ENCODE measurements at regions of chr22 and their contacts with region 1.

Region 1: DNA sequence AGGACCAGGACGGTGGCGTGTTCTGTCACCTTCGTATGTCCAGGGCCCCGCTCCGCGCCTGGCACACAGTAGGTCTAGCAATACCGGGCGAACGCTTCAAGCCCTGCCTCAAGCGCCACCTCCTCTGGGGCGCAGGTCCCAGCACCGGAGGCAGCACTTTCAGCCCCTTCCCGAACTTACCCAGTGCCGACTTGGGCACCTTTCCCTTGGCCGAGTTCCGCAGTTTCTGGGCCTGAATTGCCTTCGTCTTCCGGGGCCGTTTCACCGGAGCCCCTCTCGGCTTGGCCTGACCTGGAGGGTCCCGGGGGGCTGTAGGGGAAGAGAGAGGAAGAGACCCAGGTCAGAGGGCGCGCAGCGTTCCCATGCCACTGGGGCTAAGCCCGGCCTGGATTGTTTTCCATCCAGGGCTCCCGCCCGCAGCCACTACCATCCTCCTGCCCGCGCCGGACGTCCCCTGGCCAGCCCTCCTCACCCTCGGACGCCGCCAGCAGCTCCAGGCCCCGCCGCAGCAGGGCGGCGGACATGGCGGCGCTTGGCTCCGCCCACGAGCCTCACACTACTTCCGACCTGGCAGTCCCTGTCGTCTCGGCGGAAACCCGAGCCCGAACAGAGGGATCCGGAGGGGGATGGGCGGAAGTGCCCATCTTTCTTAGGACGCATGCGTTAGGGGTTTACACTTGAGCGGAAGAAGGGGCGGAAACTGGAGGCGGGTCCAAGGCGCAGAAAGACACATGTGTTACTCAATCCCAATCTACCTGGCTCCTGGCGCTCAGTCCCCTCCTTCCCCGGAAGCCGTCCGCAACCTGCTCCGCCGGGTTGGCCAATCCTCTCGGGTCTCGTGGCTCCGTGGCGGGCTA is at the start of gene RPS19BP1:
- DNase-seq: peak; percentile 100
- ATAC-seq: peak; percentile 88
- H3K4me3 Mint-ChIP-seq: peak within 1 kb of the TSS; percentile 98
- H3K27ac Mint-ChIP-seq: peak within 1 kb of the TSS; percentile 94
- H3K4me1 Mint-ChIP-seq: peaks cover 60% of the 10 kb centered on the region
- H3K27me3 Mint-ChIP-seq: no peaks in the 10 kb centered on the region
- total RNA-seq, gene RPS19BP1: 80.1 to 80.2 TPM

Region 2: DNA sequence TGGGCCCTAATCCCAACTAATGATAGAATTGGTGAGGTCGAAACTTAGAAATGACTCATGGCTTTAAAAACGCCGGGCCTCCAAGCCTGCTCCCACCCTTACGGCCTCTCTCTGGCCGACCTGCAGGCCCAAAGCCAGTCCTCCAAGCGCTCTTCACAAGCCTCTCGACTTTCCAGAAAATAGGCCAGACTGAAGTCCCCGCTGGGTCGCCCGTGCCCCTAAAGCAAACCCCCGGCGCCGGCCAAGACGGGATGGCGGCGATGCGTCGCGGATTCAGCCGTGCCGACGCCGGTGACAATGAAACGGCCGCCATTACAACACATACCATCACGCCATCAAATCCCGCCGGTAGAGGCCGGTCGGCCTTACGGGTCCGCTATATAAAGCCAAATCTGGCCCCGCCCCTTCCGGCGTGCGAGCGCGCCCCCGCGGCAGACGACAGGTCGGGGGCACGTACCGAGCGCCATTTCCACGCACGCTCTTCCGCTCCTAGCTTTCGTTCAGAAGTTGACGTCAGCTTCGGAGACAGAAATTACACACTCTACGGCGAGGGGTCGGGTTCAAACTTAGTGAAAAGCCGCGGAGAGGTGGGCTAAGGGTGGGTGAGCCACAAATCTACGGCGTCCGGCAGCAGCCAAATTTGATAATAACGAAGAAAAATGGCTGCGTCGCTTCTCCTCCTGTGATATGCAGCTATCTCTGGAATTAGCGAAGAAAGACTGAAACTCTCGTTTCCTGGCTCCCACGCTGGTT is 213.0 kb before region 1 on chr22 and contains the start of gene RPL3:
- CTCF ChIA-PET with region 1: interaction called, 42 read pairs
- POLR2A ChIA-PET with region 1: interaction called, 56 read pairs
- DNase-seq: peak; percentile 97
- ATAC-seq: peak; percentile 83
- H3K4me3 Mint-ChIP-seq: peak within 1 kb of the TSS; percentile 100
- H3K27ac Mint-ChIP-seq: peak within 1 kb of the TSS; percentile 99
- H3K4me1 Mint-ChIP-seq: peaks cover 46% of the 10 kb centered on the region
- H3K27me3 Mint-ChIP-seq: no peaks in the 10 kb centered on the region
- total RNA-seq, gene RPL3: 1,693 to 1,717 TPM

Region 3: GRCh38 chr22:39490135-39490798 is 42.2 kb before region 1 on chr22:
- CTCF ChIA-PET with region 1: interaction called, 264 read pairs
- POLR2A ChIA-PET with region 1: interaction called, 9 read pairs
- DNase-seq: peak; percentile 89
- ATAC-seq: peak; percentile 99
- H3K4me3 Mint-ChIP-seq: peak overlapping the region; percentile 37
- H3K27ac Mint-ChIP-seq: peak overlapping the region; percentile 33
- H3K4me1 Mint-ChIP-seq: peaks cover 39% of the 10 kb centered on the region
- H3K27me3 Mint-ChIP-seq: no peaks in the 10 kb centered on the region

Region 4: GRCh38 chr22:39520054-39520891 is 12.2 kb before region 1 on chr22 and contains the start of gene ATF4:
- CTCF ChIA-PET with region 1: interaction called, 81 read pairs
- POLR2A ChIA-PET with region 1: interaction called, 75 read pairs
- DNase-seq: peak; percentile 98
- ATAC-seq: peak; percentile 89
- H3K4me3 Mint-ChIP-seq: peak within 1 kb of the TSS; percentile 90
- H3K27ac Mint-ChIP-seq: peak within 1 kb of the TSS; percentile 98
- H3K4me1 Mint-ChIP-seq: peaks cover 61% of the 10 kb centered on the region
- H3K27me3 Mint-ChIP-seq: no peaks in the 10 kb centered on the region
- total RNA-seq, gene ATF4: 412 to 426 TPM

Region 5: DNA sequence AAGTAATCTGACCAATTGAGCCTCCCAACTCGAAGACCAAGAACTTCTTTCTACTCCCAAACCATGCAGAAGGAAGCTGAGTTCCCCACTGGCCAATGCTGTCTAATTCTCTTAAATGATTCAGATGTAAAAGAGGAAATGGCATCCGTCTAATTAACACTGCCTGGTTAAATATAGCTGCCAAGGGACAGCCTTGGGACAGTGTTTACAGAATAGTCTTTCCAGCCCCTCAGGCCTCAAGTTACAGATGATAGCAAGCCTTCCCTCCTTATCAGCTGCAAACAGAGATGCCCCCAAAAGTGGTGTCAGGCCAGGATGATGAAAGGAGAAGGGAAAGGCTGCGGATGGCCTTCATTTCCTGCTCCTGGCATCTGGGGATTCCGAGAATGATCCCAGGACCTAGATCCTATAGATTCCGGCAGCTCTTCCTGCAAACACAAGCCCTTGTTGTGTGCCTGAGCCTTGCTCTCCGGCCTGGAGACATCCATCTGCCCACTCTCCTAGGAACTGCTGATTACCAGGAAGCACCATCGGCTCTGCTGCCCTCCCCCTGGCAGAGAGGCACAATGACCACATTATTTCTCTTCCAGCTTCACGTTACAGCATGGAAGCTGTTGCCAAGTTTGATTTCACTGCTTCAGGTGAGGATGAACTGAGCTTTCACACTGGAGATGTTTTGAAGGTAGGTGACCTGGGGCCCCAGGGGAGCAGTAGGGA is 414.2 kb after region 1 on chr22:
- CTCF ChIA-PET with region 1: interaction called, 14 read pairs
- POLR2A ChIA-PET with region 1: no interaction called
- DNase-seq: no peak
- ATAC-seq: no peak
- H3K4me3 Mint-ChIP-seq: no peak overlapping the region
- H3K27ac Mint-ChIP-seq: peak overlapping the region; percentile 58
- H3K4me1 Mint-ChIP-seq: peaks cover 98% of the 10 kb centered on the region
- H3K27me3 Mint-ChIP-seq: no peaks in the 10 kb centered on the region

Region 6: GRCh38 chr22:40044102-40044869 is 511.8 kb after region 1 on chr22:
- CTCF ChIA-PET with region 1: interaction called, 28 read pairs
- POLR2A ChIA-PET with region 1: interaction called, 7 read pairs
- DNase-seq: peak; percentile 99
- ATAC-seq: peak; percentile 90
- H3K4me3 Mint-ChIP-seq: peak overlapping the region; percentile 89
- H3K27ac Mint-ChIP-seq: peak overlapping the region; percentile 99
- H3K4me1 Mint-ChIP-seq: peaks cover 42% of the 10 kb centered on the region
- H3K27me3 Mint-ChIP-seq: peaks cover 8% of the 10 kb centered on the region

Measured in activated CD8-positive, alpha-beta T cell treated with anti-CD3 and anti-CD28 coated beads, Interleukin-2, amount 10 ng/mL, durations not matched to agents 7 days and 5 days (primary cell).